Dendritic cell treated with granulocyte-macrophage colony-stimulating factor and Interleukin-4, amounts not matched to agents 40 ng/mL and 50 ng/mL, for 4 days (primary cell): ENCODE measurements at regions of chr2 and their contacts with region 1.

Region 1: GRCh38 chr2:38000485-38001222 is 75.3 kb downstream of the CYP1B1 start:
- H3K4me3 Mint-ChIP-seq: no peak overlapping the region
- H3K27ac Mint-ChIP-seq: no peak overlapping the region
- H3K4me1 Mint-ChIP-seq: no peaks in the 10 kb centered on the region
- H3K27me3 Mint-ChIP-seq: no peaks in the 10 kb centered on the region

Region 2: GRCh38 chr2:38037757-38038621 is 37.3 kb after region 1 on chr2:
- intact Hi-C with region 1: loop called (anchors 5 kb)
- H3K4me3 Mint-ChIP-seq: peak overlapping the region; percentile 71
- H3K27ac Mint-ChIP-seq: peak overlapping the region; percentile 28
- H3K4me1 Mint-ChIP-seq: peaks cover 23% of the 10 kb centered on the region
- H3K27me3 Mint-ChIP-seq: peaks cover 52% of the 10 kb centered on the region

Region 3: GRCh38 chr2:38427936-38428335 is 427.3 kb after region 1 on chr2:
- intact Hi-C with region 1: no loop called
- H3K4me3 Mint-ChIP-seq: no peak overlapping the region
- H3K27ac Mint-ChIP-seq: no peak overlapping the region
- H3K4me1 Mint-ChIP-seq: no peaks in the 10 kb centered on the region
- H3K27me3 Mint-ChIP-seq: peaks cover 8% of the 10 kb centered on the region